A673 (cell line): ENCODE measurements at regions of chr21 and their contacts with region 1.

Region 1: GRCh38 chr21:20822666-20823065 is 175.5 kb upstream of the NCAM2 start:
- DNase-seq: peak; percentile 22
- H3K4me3 ChIP-seq: no peak overlapping the region
- H3K27ac ChIP-seq: no peak overlapping the region
- H3K4me1 ChIP-seq: no peaks in the 10 kb centered on the region
- H3K27me3 ChIP-seq: no peaks in the 10 kb centered on the region
- CTCF ChIP-seq: no peak

Region 2: GRCh38 chr21:20741445-20741844 is 81.2 kb before region 1 on chr21:
- CTCF ChIA-PET with region 1: no interaction called
- POLR2A ChIA-PET with region 1: no interaction called
- intact Hi-C with region 1: no loop called
- DNase-seq: no peak
- H3K4me3 ChIP-seq: no peak overlapping the region
- H3K27ac ChIP-seq: no peak overlapping the region
- H3K4me1 ChIP-seq: no peaks in the 10 kb centered on the region
- H3K27me3 ChIP-seq: no peaks in the 10 kb centered on the region
- CTCF ChIP-seq: no peak

Region 3: DNA sequence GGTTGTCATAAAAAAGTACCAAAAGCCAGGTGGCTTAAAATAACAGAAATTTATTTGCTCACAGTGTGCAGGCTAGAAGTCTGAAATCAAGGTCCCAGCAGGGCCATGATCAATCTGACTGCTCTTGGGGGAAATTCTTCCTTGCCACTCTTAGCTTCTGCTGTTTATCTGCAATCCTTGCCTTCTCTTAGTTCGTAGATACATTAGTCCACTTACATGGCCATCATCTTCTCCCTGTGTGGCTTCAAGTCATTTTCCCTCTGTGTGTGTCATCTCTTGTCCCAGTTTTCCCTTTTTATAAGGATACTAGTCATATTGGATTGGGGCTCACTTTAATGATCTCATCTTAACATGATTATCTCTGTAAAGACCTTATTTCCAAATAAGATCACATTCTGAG is 51.5 kb after region 1 on chr21:
- CTCF ChIA-PET with region 1: no interaction called
- POLR2A ChIA-PET with region 1: no interaction called
- intact Hi-C with region 1: loop called (anchors 5 kb)
- DNase-seq: no peak
- H3K4me3 ChIP-seq: no peak overlapping the region
- H3K27ac ChIP-seq: no peak overlapping the region
- H3K4me1 ChIP-seq: no peaks in the 10 kb centered on the region
- H3K27me3 ChIP-seq: no peaks in the 10 kb centered on the region
- CTCF ChIP-seq: no peak

Region 4: DNA sequence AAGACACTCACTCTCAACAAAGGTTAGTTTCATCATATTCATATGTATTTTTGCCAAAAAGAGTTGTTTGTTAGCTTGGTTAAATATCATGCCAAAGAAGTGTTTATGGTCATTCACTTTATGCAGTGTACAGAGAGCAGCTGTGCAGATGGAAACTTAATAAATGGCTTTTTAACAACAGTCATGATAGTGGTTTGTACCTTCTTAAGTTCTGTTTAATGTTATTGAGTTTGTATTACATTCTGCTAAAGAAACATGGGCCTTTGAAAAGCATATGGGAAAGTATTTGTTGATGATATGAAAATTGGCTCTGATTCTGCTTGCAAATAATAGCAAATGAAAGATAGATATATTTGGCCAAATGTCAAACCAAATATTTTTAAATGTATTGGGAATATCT is 782.9 kb after region 1 on chr21:
- CTCF ChIA-PET with region 1: no interaction called
- POLR2A ChIA-PET with region 1: no interaction called
- intact Hi-C with region 1: no loop called
- DNase-seq: no peak
- H3K4me3 ChIP-seq: no peak overlapping the region
- H3K27ac ChIP-seq: no peak overlapping the region
- H3K4me1 ChIP-seq: no peaks in the 10 kb centered on the region
- H3K27me3 ChIP-seq: no peaks in the 10 kb centered on the region
- CTCF ChIP-seq: no peak